Esophagus squamous epithelium (tissue), 5 donors: ENCODE measurements at regions of chr19 and their contacts with region 1.

Region 1: DNA sequence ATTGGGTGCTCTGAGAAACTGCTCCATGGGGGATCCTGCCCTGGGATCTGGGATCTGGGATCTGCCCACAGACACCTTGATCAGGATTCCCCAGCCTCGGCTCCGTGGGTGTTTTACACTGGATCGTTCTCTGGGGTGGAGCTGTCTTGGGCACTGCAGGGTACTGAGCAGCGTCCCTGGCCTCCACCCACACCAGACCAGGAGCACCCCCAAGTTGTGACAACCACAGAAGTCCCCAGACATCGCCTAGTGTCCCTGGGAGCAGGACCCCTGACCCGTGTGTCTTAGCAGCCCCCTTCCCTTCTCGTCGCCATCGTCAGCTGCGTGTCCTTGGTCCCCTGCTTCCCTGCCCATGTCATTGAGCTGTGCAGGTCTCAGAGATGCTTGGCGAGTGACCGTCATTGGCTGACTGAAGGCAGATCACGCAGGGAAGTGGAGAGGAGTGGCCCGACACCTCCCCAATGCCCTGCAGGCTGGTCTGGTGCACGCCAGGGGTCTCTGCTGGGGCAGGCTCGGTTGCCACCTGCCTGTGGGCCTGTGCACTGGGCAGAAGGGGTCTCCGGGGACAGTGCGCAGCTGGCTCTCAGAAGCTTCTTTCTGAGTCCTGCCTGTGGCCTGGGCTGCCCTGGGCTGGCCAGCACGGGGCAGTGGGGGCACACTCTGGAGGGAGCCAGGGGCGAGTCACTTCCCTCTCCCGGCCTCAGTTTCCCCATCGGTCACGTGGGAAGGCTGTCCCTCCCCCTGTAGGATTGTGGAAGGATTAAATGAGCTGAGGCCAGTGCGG is 6.1 kb downstream of the GNA11 start:
- DNase-seq: no peak
- H3K4me3 ChIP-seq: no peak overlapping the region
- H3K27ac ChIP-seq: no peak overlapping the region
- H3K4me1 ChIP-seq: peaks cover 56 to 100% (median 56%) of the 10 kb centered on the region in 3 donors
- H3K27me3 ChIP-seq: no peaks in the 10 kb centered on the region
- CTCF ChIP-seq: no peak
- POLR2A ChIP-seq: no peak

Region 2: GRCh38 chr19:2962045-2962561 is 138.2 kb before region 1 on chr19:
- intact Hi-C with region 1: loop called (anchors 5 kb)
- DNase-seq: no peak
- H3K4me3 ChIP-seq: no peak overlapping the region
- H3K27ac ChIP-seq: peak overlapping the region in 1 of 4 donors; percentile 17
- H3K4me1 ChIP-seq: peaks cover 0 to 14% (median 0%) of the 10 kb centered on the region in 3 donors
- H3K27me3 ChIP-seq: no peaks in the 10 kb centered on the region
- CTCF ChIP-seq: peak; percentile 54 to 92 (median 88)
- POLR2A ChIP-seq: no peak

Region 3: DNA sequence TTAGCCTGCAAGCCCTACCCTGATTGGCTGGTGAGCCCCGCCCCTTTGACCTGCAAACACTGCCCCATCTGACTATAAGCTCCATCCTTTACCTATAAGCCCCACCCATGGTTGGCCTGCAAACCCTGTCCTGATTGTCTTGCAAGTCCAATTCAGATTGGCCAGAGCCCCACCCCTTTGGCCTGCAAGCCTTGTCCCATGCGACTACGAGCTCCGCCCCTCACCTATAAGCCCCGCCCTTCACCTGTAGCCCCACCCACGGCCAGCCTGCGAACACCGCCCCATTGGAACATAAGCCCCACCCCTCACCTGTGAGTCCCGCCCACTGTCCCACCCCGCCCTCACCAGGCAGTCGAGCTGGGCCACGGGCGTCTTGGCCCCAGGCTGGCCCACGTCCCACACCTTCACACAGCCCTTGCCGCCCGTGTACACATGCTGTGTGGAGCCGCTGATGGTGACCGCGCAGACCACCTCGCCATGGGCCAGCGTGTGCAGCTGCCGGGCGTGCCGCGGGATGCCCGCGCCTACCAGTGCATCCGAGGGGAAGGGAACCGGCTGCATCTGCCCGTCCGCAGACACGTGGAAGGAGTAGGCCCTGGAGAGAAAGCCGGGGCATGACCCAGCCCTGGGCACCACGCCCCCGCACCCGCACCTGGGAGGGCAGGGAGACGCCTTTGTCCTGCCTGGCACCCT is 94.1 kb before region 1 on chr19:
- intact Hi-C with region 1: no loop called
- DNase-seq: no peak
- H3K4me3 ChIP-seq: no peak overlapping the region
- H3K27ac ChIP-seq: no peak overlapping the region
- H3K4me1 ChIP-seq: peaks cover 0 to 6% (median 0%) of the 10 kb centered on the region in 3 donors
- H3K27me3 ChIP-seq: no peaks in the 10 kb centered on the region
- CTCF ChIP-seq: no peak
- POLR2A ChIP-seq: no peak

Region 4: DNA sequence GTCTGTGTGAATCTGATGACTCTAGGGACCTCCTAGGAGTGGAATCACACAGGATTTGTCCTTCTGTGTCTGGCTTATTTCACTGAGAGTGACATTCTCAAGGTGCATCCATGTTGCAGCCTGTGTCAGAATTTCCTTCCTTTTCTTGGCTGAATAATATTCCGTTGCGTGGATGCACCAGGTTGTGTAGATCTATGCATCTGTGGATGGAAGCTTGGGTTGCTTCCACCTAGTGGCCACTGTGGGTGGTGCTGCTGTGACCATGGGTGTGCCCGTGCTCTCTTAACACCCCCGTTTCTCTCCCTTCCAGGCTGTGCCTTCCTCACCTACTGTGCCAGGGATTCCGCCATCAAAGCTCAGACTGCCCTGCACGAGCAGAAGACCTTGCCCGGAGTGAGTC is 150.4 kb after region 1 on chr19:
- intact Hi-C with region 1: no loop called
- DNase-seq: no peak
- H3K4me3 ChIP-seq: no peak overlapping the region
- H3K27ac ChIP-seq: no peak overlapping the region
- H3K4me1 ChIP-seq: no peaks in the 10 kb centered on the region
- H3K27me3 ChIP-seq: peaks cover 0 to 63% (median 0%) of the 10 kb centered on the region in 4 donors
- CTCF ChIP-seq: peak in 5 of 6 experiments; percentile 34 to 60 (median 38)
- POLR2A ChIP-seq: no peak